Calu3 (cell line): ENCODE measurements at regions of chr9 and their contacts with region 1.

Region 1: DNA sequence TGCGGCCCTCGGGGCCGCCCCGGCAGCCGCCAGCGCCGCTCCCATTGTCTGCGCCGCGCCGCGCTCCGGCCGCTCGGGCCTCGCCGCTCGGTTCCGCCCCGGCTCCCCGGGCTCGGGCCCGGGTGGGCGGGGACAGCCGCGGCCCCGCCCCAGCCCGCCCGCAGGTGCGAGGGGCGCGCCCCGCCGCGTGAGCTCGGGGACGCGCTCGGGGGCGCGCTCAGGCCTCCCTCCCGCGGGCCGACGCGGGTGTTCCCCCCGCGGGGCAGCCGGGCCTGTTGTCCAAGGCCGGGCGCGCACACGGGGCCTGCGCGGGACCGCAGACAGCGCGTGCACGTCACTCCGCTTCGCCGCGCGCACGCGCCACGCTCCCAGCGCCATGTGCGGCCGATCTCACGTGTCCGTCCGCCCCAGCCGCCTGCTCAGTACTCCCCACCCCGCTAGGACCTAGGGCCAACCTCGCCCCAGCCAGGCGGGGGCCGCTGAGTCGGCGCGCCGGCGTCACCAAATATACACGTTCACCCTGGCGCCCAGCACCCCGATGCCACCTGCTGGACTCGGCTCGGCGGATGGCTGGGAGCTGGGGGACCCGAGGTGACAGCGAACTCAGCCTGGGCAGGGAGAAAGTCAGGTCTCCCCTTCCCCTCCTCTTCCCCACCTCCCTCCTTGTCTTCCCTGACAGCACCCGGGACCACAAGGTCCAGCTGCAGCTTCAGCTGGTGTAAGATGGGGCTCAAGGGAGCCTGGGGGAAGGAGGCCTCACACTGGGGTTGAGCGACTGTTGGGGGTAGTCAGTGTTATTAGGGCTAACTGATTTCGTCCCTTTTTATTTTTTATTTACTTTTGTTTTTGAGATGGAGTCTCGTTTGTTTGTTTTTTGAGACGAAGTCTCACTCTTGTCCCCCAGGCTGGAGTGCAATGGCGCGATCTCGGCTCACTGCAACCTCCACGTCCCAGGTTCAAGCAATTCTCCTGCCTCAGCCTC is 14.3 kb downstream of the GBGT1 start:
- DNase-seq: peak; percentile 87
- H3K4me3 Mint-ChIP-seq: peak overlapping the region; percentile 84
- H3K27ac Mint-ChIP-seq: no peak overlapping the region
- H3K4me1 Mint-ChIP-seq: no peaks in the 10 kb centered on the region
- H3K27me3 Mint-ChIP-seq: peaks cover 7% of the 10 kb centered on the region
- CTCF ChIP-seq: no peak

Region 2: GRCh38 chr9:133030317-133031129 is 118.9 kb before region 1 on chr9 and contains the start of gene GTF3C5:
- CTCF ChIA-PET with region 1: no interaction called
- intact Hi-C with region 1: loop called (anchors 10 kb)
- DNase-seq: peak; percentile 88
- H3K4me3 Mint-ChIP-seq: peak within 1 kb of the TSS; percentile 94
- H3K27ac Mint-ChIP-seq: peak within 1 kb of the TSS; percentile 75
- H3K4me1 Mint-ChIP-seq: peaks cover 14% of the 10 kb centered on the region
- H3K27me3 Mint-ChIP-seq: no peaks in the 10 kb centered on the region
- CTCF ChIP-seq: no peak
- total RNA-seq, gene GTF3C5: 43.7 and 48.4 TPM in 2 replicates

Region 3: GRCh38 chr9:133048569-133048968 is 100.8 kb before region 1 on chr9:
- CTCF ChIA-PET with region 1: no interaction called
- intact Hi-C with region 1: no loop called
- DNase-seq: peak; percentile 14
- H3K4me3 Mint-ChIP-seq: no peak overlapping the region
- H3K27ac Mint-ChIP-seq: no peak overlapping the region
- H3K4me1 Mint-ChIP-seq: no peaks in the 10 kb centered on the region
- H3K27me3 Mint-ChIP-seq: no peaks in the 10 kb centered on the region
- CTCF ChIP-seq: no peak

Region 4: GRCh38 chr9:133103183-133103986 is 46.0 kb before region 1 on chr9:
- CTCF ChIA-PET with region 1: interaction called, 36 read pairs
- intact Hi-C with region 1: loop called (anchors 1 kb)
- DNase-seq: peak; percentile 74
- H3K4me3 Mint-ChIP-seq: no peak overlapping the region
- H3K27ac Mint-ChIP-seq: no peak overlapping the region
- H3K4me1 Mint-ChIP-seq: no peaks in the 10 kb centered on the region
- H3K27me3 Mint-ChIP-seq: no peaks in the 10 kb centered on the region
- CTCF ChIP-seq: peak; percentile 89